Left colon (tissue), 2 donors: ENCODE measurements at regions of chr1 and their contacts with region 1.

Region 1: GRCh38 chr1:27154991-27155781 is at the start of gene SLC9A1:
- DNase-seq: peak; percentile 92 to 96
- ATAC-seq: peak; percentile 79
- total RNA-seq, gene SLC9A1: 122 to 131 TPM

Region 2: GRCh38 chr1:26864610-26865527 is 290.3 kb before region 1 on chr1:
- intact Hi-C with region 1: no loop called
- DNase-seq: peak; percentile 96 to 97
- ATAC-seq: peak; percentile 74

Region 3: DNA sequence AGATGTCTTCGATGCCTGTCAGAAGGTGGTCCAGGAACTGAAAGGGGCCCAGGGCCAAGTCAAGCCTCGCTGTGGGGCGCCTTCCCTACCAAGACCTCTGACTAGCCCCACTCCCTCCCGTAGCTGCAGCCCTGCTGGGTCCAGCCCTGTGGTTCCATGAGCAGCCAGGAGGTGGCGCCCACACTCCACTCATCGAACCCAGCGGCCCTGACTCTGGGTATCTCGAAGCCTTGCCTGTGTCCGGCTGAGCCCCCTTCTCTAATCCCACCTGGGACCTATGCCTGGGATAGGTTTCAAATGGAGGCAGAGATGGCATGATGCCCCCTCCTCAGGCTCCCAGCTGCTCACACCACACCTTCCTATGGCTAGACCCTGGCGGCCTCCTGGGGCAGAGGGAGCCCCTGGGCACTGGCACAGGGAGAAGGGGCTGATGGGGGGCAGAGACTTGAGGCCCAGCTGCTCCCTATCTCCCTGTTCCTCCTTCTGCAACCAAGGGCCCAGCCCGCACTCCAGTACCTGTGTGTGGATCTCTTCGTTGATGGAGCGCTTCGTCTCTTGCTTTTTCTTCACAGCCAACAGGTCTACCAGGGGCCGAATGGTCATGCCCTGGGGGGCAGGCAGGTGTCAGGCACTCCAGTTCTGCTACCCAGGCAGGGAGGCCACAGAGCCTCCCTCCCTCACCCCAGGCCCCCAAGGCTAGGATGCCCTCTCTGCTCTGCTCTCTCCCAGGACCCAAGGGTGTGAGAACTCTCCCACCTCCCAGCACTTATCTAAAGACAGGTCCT is 52.3 kb before region 1 on chr1:
- intact Hi-C with region 1: loop called in 1 of 2 experiments (anchors 10 kb)
- DNase-seq: peak; percentile 18 to 81
- ATAC-seq: peak; percentile 64

Region 4: GRCh38 chr1:27616441-27616840 is 461.3 kb after region 1 on chr1:
- intact Hi-C with region 1: no loop called
- DNase-seq: no peak
- ATAC-seq: no peak